ENCODE measurements at regions of chr7 and their contacts with region 1.

Region 1: GRCh38 chr7:149195180-149196150 is at the start of gene ZNF282:
- DNase-seq: peak; percentile 87
- ATAC-seq: peak; percentile 93
- H3K4me3 Mint-ChIP-seq: peak within 1 kb of the TSS; percentile 94
- H3K27ac Mint-ChIP-seq: peak within 1 kb of the TSS; percentile 93
- H3K4me1 Mint-ChIP-seq: peaks cover 53% of the 10 kb centered on the region
- H3K27me3 Mint-ChIP-seq: peaks cover 2% of the 10 kb centered on the region
- total RNA-seq, gene ZNF282: 42.0 to 49.7 TPM

Region 2: GRCh38 chr7:149125863-149126661 is 69.4 kb before region 1 on chr7 and contains the start of gene ZNF425:
- CTCF ChIA-PET with region 1: interaction called, 14 read pairs
- DNase-seq: peak; percentile 94
- ATAC-seq: peak; percentile 89
- H3K4me3 Mint-ChIP-seq: peak within 1 kb of the TSS; percentile 88
- H3K27ac Mint-ChIP-seq: peak within 1 kb of the TSS; percentile 99
- H3K4me1 Mint-ChIP-seq: peaks cover 22% of the 10 kb centered on the region
- H3K27me3 Mint-ChIP-seq: no peaks in the 10 kb centered on the region
- total RNA-seq, gene ZNF425: 0.53 to 0.91 TPM

Region 3: DNA sequence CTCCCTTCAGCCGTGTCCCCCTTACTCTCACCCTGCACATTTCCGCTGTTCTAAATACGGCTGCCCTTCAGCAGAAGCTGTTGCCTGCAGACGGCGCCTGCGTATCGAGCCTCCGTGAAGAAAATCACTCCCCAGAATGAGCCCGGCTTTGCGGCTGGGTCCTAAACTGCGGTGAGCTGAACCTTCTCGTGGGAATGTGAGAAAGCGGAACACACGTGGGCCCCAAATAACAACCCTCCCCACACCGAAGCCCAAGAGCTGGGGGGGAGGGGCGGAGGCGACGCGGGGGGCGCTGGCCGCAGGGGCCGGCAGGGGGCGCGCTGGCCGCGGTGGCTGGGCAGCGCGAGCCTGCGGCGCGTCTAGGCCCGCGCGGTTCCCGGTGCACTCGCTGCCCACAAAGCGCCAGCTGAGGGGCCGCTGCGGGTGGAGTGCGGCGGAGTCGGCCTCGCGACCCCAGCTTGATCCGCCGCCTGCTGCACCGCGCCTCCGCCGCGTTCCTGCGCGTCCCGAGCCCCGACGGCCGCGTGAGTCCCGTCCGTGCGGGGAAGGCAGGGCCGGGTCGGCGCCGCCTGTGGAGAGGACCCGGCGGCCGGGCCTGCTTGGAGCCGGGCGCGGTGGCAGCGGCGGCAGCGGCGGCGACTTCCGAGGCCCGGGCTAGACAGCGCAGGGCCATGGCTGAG is 48.3 kb before region 1 on chr7 and contains the start of gene ZNF398:
- CTCF ChIA-PET with region 1: interaction called, 16 read pairs
- DNase-seq: peak; percentile 79
- ATAC-seq: peak; percentile 82
- H3K4me3 Mint-ChIP-seq: peak within 1 kb of the TSS; percentile 90
- H3K27ac Mint-ChIP-seq: peak within 1 kb of the TSS; percentile 88
- H3K4me1 Mint-ChIP-seq: peaks cover 29% of the 10 kb centered on the region
- H3K27me3 Mint-ChIP-seq: no peaks in the 10 kb centered on the region
- total RNA-seq, gene ZNF398: 12.1 to 13.2 TPM

Region 4: DNA sequence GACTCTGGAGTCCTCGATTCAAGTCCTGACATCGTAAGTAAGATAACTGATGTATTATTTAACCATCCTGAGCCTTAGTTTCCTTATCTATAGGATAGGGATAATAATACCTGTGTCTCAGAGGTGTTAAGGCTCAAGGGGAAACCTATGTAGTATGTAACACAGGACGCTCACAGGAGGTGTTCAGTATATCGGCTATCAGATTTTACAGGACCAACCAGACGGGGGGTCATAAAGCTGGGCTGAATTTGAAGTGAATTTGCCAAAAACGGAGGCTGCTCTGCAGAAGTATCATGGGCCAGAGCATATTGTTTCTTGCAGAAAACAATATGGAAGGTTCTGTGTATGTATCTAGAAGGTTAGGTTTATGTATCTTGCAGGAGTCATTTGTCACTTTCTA is 11.2 kb before region 1 on chr7:
- CTCF ChIA-PET with region 1: interaction called, 21 read pairs
- DNase-seq: no peak
- ATAC-seq: no peak
- H3K4me3 Mint-ChIP-seq: no peak overlapping the region
- H3K27ac Mint-ChIP-seq: no peak overlapping the region
- H3K4me1 Mint-ChIP-seq: peaks cover 4% of the 10 kb centered on the region
- H3K27me3 Mint-ChIP-seq: no peaks in the 10 kb centered on the region